ENCODE measurements at regions of chr11 and their contacts with region 1.

Region 1: DNA sequence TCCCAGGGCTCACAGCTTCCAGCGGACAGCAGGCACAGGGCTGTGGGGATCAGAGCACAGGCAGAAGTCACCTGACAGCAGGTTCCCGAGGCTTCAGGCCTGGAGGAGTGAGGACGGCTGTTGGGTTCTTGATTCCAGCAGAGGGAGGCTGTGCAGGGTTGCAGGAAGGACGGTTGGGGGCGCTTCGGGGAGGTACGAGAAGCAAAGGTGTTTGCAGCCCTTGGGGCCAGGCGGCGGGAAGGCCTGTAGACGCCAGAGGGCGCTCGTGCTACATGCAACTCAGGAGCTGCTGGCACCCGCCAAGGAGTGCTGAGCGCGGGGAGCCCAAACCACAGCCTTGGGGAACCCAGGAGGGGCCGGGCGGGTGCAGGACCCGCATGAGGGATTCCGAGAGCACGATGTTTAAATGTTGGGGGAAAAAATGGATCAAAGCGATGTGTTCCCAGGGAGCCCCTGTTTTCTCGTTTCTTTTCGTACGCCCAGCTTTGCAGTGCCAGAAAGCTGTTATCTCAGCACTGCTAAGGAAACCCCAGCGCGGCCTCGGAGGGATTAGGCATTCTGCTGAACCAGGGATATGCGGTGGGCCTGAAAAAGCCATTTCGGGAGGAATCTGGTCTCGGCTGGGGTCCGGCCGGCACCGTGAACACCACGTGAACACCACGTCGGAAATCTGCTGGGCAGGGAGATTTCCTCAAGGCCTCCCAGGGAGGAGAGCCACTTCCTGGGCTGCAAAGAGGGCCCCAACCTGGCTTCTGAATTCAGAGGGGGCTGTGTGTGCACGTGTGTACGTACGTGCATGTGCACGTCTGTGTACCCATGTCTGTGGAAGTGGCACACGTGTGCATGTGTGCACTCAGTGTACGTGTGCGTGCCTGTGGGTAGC is 88.1 kb downstream of the KCNQ1 start:
- DNase-seq: peak; percentile 84 to 98
- H3K4me3 ChIP-seq: no peak overlapping the region
- CTCF ChIP-seq: peak in 1 of 3 donors; percentile 92
- POLR2A ChIP-seq: no peak

Region 2: DNA sequence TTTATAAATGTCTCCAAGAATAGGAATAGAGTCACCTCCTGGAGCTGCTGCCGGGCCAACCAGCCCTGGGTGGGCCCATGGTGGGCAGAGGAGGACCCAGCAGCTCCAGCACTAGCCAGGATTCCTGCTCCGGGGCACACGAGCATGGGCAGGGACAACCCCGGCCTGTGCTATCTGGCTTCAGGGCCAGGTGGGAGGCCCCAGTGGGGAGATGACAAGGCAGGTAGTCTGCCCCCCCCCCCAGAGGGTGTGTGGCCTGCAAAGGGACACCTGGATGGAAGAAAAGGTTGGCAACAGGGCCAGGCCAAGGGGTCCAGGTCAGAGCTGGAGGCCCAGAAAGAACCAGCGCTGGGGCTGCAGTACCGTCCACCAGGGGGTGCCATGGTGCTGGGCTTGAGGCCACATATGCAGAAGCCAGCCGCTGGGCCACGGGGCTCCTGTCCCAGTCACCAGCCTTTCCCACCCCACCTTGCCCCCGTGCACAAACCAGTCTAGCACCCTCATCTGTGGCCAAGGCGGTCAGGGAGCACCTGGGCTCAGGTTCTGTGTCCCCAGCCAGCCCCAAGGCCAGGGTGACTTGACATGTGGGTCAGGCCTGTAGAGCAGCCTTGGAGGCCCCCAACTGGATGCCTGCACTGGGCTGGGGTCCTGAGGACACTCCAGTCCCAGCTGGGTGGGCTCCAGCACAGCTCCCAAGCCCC is 227.7 kb before region 1 on chr11:
- intact Hi-C with region 1: loop called (anchors 10 kb)
- DNase-seq: peak; percentile 75 to 97
- H3K4me3 ChIP-seq: no peak overlapping the region
- CTCF ChIP-seq: peak in 1 of 3 donors; percentile 78
- POLR2A ChIP-seq: no peak

Region 3: DNA sequence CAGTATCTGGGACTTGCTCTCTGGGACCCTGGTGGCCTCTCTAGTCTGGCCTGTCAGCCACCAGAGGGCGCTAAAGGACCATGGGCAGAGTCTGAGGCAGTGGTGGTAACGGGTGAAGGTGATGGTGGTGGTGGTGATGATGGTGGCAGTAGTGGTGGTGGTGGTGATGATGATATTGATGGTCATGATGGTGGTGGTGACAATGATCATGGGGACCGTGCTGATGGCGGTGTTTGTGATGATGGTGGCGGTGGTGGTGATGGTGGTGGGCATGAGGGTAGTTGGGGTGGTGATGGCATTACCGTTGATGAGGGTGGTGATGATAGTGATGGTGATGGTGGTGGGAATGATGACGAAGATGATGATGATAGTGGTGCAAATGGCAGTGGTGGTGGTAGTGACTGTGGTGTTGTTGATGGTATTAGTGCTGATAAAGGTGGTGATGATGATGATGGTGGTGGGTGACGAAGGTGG is 104.6 kb before region 1 on chr11:
- intact Hi-C with region 1: loop called (anchors 2 kb)
- DNase-seq: peak; percentile 66 to 94
- H3K4me3 ChIP-seq: no peak overlapping the region
- CTCF ChIP-seq: peak in 1 of 3 donors; percentile 70
- POLR2A ChIP-seq: no peak

Region 4: GRCh38 chr11:2888266-2888968 is 355.5 kb after region 1 on chr11:
- intact Hi-C with region 1: loop called (anchors 2 kb)
- DNase-seq: peak; percentile 89 to 99
- H3K4me3 ChIP-seq: no peak overlapping the region
- CTCF ChIP-seq: peak in 1 of 3 donors; percentile 95
- POLR2A ChIP-seq: no peak

Region 5: DNA sequence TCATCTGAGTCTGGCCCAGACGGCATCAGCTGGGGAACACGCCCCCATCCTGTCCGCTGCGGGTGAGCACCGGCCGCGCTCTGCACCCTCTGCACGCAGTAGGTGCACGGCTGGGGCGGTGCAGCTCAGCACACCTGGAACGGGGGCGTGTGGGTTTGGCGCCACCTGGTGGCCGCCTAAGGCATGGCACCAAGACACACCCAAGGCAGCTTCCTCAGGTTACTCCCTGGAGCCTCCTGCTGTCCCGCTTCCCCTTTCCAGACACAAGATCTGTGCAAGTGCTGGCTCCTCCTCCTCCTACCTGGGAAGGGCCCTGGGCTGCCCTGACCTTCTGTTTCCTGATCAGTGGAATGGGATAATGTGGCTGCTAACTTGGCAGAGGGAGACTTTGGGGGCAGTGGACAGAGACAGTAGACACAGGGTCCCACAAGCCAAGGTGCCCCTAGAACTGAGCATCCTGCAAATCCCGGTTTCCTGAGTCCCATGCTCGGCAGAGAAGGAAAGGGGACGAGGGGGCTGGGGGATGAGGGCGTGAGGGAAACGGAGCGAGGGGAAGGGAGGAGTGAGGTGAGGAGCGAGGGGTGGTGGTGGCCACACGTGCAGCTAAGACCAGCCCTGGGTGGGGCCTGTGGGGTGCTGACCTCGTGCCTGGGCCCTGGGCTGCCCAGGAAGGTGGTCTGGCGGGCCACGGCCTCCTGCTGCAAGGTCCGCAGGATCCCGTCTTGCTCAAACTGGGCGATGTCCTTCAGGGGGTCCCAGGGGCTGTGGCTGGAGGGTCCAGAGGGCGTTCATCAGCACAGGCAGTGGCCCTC is 559.1 kb after region 1 on chr11:
- intact Hi-C with region 1: loop called (anchors 10 kb)
- DNase-seq: peak in 1 of 2 donors; percentile 92
- H3K4me3 ChIP-seq: no peak overlapping the region
- CTCF ChIP-seq: peak in 2 of 3 donors; percentile 54 to 75
- POLR2A ChIP-seq: no peak